ENCODE measurements at regions of chr9 and their contacts with region 1.

Region 1: GRCh38 chr9:92140074-92140753 is 25.0 kb upstream of the SPTLC1 start:
- DNase-seq: peak; percentile 80
- H3K4me3 Mint-ChIP-seq: no peak overlapping the region
- H3K27ac Mint-ChIP-seq: no peak overlapping the region
- H3K4me1 Mint-ChIP-seq: peaks cover 7% of the 10 kb centered on the region
- H3K27me3 Mint-ChIP-seq: peaks cover 28% of the 10 kb centered on the region

Region 2: DNA sequence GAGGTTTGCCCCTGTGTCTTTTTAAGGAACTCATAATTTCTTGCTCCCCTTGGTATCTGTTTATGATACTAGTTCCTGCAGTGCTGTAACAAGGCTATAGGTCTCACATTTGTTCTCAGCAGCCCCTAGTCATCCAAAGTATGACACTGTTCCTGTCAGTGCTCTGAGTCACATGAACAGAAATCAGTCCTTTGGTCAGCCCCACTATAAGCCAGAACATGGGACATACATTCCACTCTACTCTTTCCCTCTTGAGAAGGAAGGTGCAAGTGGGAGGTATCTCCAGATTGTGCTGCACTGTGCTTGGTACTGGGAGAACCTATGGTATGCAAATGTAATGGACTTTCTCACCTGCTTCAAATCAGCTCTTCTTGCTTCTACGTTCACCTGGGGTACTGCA is 66.3 kb after region 1 on chr9:
- CTCF ChIA-PET with region 1: interaction called, 22 read pairs
- POLR2A ChIA-PET with region 1: no interaction called
- intact Hi-C with region 1: loop called (anchors 10 kb)
- DNase-seq: no peak
- H3K4me3 Mint-ChIP-seq: no peak overlapping the region
- H3K27ac Mint-ChIP-seq: no peak overlapping the region
- H3K4me1 Mint-ChIP-seq: no peaks in the 10 kb centered on the region
- H3K27me3 Mint-ChIP-seq: no peaks in the 10 kb centered on the region

Region 3: DNA sequence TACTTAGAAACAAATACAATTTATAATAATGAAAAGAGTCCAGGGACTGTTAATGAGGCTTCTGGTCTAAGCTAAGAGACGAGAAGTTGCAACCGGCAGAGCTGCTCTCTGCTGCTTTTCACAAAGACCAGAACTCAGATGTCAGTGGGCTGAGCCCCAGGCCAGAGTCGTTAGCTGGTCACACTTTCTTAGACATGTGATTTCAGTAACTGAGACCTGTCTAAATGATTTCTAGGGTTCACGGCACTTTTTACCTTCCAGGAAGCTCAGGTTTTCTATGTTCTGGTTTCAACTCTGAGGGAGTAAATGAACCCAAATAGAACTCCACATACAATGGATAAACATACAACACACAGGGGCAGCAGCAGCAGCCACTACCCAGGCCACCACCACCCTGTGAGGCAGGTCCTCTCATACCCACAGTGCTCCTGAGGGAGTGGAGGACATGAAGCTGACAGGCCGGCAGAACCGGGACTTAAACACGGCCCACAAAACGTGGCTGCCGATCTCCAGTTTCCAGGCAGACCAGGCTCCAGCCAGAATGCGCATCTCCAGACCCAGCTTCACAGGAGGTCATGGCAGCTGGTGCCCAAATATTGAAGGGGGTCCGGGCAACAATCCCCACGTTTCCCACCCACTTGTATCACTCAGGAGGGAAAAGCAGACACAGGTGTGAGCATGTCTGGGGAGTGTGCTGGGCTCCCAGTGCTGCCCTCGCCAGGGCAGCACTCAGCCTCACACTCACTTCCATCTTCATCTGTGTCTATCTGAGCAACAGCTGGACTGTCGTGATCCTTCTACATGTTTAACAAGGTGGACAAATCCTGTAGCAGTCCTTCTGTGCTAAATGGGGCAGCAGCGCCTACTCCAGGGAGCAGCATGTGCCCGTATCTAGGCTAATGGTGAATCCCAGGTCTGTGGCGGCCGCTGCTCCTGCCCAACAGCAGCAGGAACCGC is 114.4 kb after region 1 on chr9:
- CTCF ChIA-PET with region 1: interaction called, 10 read pairs
- POLR2A ChIA-PET with region 1: no interaction called
- intact Hi-C with region 1: loop called (anchors 10 kb)
- DNase-seq: no peak
- H3K4me3 Mint-ChIP-seq: no peak overlapping the region
- H3K27ac Mint-ChIP-seq: no peak overlapping the region
- H3K4me1 Mint-ChIP-seq: no peaks in the 10 kb centered on the region
- H3K27me3 Mint-ChIP-seq: no peaks in the 10 kb centered on the region

Region 4: DNA sequence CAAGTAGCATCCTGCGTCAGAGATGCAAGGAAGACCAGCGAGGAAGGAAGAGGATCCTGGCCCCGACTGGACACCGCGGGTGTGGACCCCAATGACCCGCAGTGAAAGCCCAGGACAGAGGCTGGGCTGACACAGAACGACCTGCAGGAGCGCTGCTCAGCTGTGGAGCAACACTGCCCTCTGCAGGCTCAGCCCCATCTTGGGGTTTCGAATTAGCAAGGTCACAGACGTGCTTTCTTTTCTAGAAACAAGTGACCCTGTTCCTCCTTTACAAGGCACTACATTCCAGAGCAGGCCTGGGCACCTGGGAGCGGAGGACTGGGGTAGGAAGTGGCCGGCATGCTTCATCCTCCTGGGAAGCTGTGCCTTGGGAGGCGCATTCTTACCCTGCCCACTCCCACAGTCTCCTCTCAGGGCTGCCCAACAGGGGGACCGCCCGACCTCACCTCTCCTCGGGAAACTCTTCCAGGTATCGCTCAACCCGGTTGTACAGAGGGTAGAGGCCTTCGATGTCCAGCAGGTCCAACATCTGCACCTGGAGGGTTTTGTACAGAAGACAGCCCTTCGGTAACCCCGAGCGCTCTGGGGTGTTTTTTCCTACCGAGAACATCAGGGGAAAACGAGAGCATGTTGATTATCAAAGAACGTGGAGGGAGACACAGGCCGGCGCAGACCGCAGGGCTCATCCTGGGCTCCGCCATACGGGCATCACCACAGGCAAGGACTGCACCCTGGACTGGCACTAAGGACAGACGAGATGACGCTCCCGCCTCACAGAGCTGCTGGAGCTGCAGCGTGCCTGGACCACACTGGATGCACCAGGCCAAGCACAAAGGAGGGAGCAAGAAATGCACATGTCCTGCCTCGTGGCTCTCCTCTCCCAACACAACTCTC is 494.7 kb after region 1 on chr9:
- CTCF ChIA-PET with region 1: interaction called, 33 read pairs
- POLR2A ChIA-PET with region 1: no interaction called
- intact Hi-C with region 1: loop called (anchors 5 kb)
- DNase-seq: peak; percentile 76
- H3K4me3 Mint-ChIP-seq: no peak overlapping the region
- H3K27ac Mint-ChIP-seq: no peak overlapping the region
- H3K4me1 Mint-ChIP-seq: peaks cover 7% of the 10 kb centered on the region
- H3K27me3 Mint-ChIP-seq: no peaks in the 10 kb centered on the region

Region 5: GRCh38 chr9:92706216-92706940 is 566.2 kb after region 1 on chr9:
- CTCF ChIA-PET with region 1: no interaction called
- POLR2A ChIA-PET with region 1: no interaction called
- intact Hi-C with region 1: loop called (anchors 5 kb)
- DNase-seq: peak; percentile 68
- H3K4me3 Mint-ChIP-seq: no peak overlapping the region
- H3K27ac Mint-ChIP-seq: no peak overlapping the region
- H3K4me1 Mint-ChIP-seq: peaks cover 20% of the 10 kb centered on the region
- H3K27me3 Mint-ChIP-seq: no peaks in the 10 kb centered on the region